ENCODE measurements at regions of chr7 and their contacts with region 1.

Region 1: DNA sequence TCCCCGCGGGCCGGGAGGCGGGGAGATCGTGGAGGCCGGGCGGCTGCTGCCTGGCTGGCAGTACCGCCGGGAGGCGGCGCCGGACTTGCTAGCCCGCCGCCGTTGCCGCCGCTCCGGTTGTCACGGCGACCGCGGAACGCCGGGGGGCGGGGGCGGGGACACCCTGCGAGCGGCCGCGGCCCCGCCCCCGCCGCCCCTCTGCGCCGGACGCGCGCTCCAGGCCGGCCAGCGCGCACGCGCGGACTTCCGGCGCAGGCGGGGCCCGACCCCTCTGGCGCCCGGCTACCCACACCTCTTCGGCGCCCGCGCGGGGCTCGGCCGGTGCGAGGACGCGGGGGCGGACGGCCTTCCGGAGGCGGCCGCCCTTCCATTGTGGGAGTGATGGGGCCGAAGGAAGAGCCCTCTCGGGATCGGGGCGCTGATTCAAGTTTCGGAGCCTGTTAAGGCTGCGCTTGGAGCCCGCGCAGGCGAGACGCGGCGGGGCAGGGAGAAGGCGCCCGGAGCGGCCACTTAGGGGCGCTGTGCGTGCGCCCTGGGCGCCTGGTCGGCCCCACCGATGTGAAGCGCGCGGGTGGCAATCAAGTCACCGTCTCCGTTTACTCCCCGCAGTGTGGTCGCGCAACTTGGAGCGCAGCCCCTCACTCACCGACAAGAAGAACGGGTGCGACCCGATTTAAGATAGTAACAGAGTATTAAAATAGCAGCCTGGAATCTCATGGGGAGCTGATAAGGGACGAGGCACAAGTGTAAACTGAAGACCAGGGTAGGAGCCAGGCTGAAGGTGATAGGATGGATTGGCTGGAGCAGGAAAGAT is 448 bp upstream of the DPY19L1 start:
- DNase-seq: peak; percentile 97
- H3K4me3 Mint-ChIP-seq: peak overlapping the region; percentile 86
- H3K27ac Mint-ChIP-seq: peak overlapping the region; percentile 78
- H3K4me1 Mint-ChIP-seq: peaks cover 24% of the 10 kb centered on the region
- H3K27me3 Mint-ChIP-seq: peaks cover 27% of the 10 kb centered on the region

Region 2: DNA sequence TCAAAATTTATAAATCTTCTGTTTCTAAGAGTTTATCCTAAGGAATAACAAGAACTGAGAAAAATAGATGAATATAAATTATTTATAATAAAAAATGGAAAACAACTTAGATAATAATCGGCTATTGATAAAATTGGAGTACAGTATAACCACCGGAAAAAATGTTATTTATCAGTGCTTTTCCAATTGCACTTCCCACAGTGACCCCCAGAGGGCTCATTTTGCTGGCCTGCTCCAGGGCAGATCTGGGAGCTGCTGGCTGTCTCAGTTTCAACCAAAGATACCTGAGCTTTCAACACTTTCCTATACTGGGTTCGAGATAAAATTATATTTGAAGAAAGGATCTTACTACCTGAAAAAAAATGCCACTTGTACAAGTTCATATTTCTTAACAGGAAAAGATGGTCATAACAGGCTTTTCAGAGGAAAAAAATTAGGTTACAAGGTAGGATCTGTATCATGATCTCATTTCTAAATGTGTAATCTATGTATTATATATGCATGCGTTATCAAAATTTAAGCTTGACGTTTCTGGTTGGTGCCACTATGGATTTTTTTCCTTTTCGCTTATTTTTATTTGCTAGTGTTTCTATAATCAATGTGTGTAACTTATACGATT is 214.0 kb before region 1 on chr7:
- intact Hi-C with region 1: loop called (anchors 2 kb)
- DNase-seq: peak; percentile 82
- H3K4me3 Mint-ChIP-seq: no peak overlapping the region
- H3K27ac Mint-ChIP-seq: no peak overlapping the region
- H3K4me1 Mint-ChIP-seq: no peaks in the 10 kb centered on the region
- H3K27me3 Mint-ChIP-seq: no peaks in the 10 kb centered on the region

Region 3: DNA sequence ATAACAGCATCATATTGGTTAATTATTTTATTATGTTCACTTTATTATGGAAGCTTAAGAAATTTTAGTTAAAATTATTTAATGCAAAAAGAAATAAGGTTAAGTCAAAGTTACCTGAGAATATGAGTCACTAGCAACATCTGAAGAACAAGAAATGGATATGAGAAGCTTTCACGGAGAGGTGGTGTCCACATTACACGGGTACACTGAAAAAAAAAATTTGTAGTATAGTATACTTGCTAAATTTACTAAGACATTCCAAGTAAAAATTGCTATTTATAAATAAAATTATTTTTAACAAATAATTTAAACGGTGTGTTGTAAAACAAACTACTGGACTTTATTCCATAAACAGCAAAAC is 64.4 kb before region 1 on chr7:
- intact Hi-C with region 1: loop called (anchors 10 kb)
- DNase-seq: no peak
- H3K4me3 Mint-ChIP-seq: no peak overlapping the region
- H3K27ac Mint-ChIP-seq: no peak overlapping the region
- H3K4me1 Mint-ChIP-seq: peaks cover 3% of the 10 kb centered on the region
- H3K27me3 Mint-ChIP-seq: no peaks in the 10 kb centered on the region

Region 4: DNA sequence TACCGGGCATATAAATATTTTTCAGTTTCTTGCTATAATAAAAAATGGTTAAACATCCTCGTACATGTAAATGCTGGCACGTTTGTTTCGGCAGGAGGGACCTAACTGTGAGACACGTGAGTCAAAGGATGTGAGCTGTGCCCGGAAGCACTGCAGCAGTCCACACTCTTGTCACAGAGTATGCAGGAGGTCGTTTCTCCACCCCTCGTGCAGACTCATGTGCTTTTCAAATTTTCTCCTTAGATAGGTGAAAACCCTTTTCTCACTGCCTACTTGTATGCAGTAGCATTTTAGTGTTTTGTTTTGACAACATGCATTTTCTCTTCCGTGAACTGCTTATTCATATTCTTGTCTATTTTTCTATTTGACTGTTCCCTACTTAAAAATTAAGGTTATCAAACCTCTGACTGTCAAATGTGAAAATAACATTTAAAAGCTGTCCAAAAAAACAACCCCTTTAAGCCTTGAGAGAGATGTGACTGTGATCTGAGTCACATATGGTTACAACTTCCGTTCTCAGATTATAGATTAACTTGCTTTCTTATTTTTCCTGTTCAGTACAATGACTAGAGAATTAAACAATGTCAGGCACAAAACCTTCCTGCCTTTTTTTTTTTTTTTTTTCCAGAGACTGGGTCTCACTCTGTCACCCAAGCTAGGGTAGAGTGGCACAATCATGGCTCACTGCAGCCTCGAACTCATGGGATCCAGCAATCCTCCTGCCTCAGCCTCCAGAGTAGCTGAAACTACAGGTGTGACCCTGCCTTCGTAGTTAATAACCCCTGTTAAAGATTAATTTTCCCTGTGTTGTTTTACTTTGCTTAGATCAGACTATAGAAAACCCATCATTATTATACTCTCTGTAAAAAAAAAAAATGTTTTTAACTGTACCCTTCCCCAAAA is 45.5 kb before region 1 on chr7:
- intact Hi-C with region 1: loop called (anchors 1 kb)
- DNase-seq: peak; percentile 68
- H3K4me3 Mint-ChIP-seq: no peak overlapping the region
- H3K27ac Mint-ChIP-seq: peak overlapping the region; percentile 79
- H3K4me1 Mint-ChIP-seq: peaks cover 13% of the 10 kb centered on the region
- H3K27me3 Mint-ChIP-seq: no peaks in the 10 kb centered on the region

Region 5: DNA sequence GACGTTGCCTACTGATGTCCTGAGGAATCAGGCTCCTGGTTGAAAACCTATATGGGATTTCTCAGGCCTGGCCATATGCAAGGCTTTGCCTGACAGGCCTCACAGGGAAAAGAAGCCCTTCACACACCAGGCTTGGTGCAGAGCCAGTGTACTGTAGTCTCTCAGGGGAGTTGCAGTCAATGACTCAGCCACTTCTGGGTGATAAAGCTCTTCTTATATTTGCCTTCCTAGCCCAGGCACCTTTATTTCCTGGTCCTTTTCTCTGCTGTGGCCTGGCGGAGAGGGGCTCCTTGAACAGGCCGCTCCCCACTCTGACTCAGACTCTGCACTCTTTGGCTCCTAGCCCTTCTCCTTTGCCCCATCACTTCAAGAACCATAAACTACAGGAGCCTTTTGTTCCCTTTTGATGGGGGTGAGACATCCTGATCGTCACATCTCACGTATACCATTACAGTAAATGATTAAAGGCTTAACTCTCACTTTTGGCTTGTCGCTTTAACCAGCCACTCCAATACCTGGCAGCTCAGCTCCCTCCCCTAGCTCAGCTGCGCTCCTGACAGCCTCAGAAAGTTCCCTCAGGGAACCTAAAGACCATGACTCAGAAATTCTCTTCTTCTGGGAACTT is 33.9 kb before region 1 on chr7:
- intact Hi-C with region 1: no loop called
- DNase-seq: no peak
- H3K4me3 Mint-ChIP-seq: no peak overlapping the region
- H3K27ac Mint-ChIP-seq: no peak overlapping the region
- H3K4me1 Mint-ChIP-seq: no peaks in the 10 kb centered on the region
- H3K27me3 Mint-ChIP-seq: no peaks in the 10 kb centered on the region